ENCODE measurements at regions of chr7 and their contacts with region 1.

Region 1: GRCh38 chr7:113033959-113034358 is 52.7 kb downstream of the GPR85 start:
- DNase-seq: no peak
- ATAC-seq: no peak
- H3K4me3 ChIP-seq: no peak overlapping the region
- H3K27ac ChIP-seq: no peak overlapping the region
- H3K4me1 ChIP-seq: no peaks in the 10 kb centered on the region
- H3K27me3 ChIP-seq: no peaks in the 10 kb centered on the region; the same call in 1 of the 2 replicates
- CTCF ChIP-seq: no peak

Region 2: DNA sequence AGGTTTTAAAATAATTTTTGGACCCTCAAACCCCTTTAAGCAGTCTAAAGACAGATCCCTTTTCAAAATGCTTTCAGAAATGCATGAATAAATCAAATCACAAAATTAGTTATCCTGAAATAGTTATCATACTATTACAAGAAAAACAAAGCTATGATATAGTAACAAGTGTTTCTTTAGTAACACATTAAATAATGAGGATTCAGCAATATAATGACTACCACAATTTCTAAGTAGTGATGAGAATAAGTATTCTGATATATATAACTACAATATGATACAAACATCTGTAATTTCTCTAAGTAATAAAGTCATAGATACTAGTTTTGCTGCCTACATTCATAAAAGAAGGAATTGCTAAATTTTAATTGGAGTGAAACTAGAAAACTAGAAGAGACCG is 190.8 kb before region 1 on chr7:
- CTCF ChIA-PET with region 1: no interaction called
- POLR2A ChIA-PET with region 1: no interaction called
- in situ Hi-C with region 1: no loop called
- intact Hi-C with region 1: no loop called
- DNase-seq: no peak
- ATAC-seq: no peak
- H3K4me3 ChIP-seq: no peak overlapping the region
- H3K27ac ChIP-seq: no peak overlapping the region
- H3K4me1 ChIP-seq: no peaks in the 10 kb centered on the region
- H3K27me3 ChIP-seq: no peaks in the 10 kb centered on the region
- CTCF ChIP-seq: no peak

Region 3: GRCh38 chr7:113100121-113100603 is 66.2 kb after region 1 on chr7:
- CTCF ChIA-PET with region 1: no interaction called
- POLR2A ChIA-PET with region 1: no interaction called
- in situ Hi-C with region 1: no loop called
- intact Hi-C with region 1: no loop called
- DNase-seq: no peak
- ATAC-seq: no peak
- H3K4me3 ChIP-seq: no peak overlapping the region
- H3K27ac ChIP-seq: no peak overlapping the region
- H3K4me1 ChIP-seq: no peaks in the 10 kb centered on the region
- H3K27me3 ChIP-seq: no peaks in the 10 kb centered on the region
- CTCF ChIP-seq: no peak

Region 4: DNA sequence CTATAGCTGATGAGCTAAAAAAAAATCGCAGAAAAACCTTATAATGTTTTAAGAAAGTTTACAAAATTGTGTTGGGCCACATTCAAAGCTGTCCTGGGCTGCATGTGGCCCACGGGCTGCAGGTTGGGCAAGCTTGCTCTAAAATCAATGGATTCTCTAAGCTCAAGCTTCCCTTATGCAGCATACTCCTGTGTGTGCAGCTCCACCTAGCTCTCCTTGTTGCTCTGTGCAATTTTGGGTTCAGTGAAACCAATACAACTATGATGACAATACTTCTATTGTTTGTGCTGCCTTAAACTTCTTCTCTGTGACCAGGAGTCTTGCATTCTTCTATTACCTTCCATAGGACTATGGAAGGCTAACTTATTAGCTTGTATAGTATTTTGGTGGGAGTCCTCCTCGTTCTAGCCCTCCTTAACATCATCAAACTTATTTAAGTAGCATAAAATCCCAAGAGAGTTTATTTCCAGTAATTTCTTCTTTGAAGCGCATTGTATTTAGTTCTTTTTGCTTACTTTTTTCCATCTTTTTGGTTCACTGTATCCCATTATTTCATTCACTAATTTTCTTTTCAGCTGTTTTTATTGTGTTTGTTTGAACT is 255.3 kb after region 1 on chr7:
- CTCF ChIA-PET with region 1: no interaction called
- POLR2A ChIA-PET with region 1: no interaction called
- in situ Hi-C with region 1: no loop called
- intact Hi-C with region 1: loop called (anchors 10 kb)
- DNase-seq: peak; percentile 10
- ATAC-seq: no peak
- H3K4me3 ChIP-seq: no peak overlapping the region
- H3K27ac ChIP-seq: no peak overlapping the region
- H3K4me1 ChIP-seq: no peaks in the 10 kb centered on the region
- H3K27me3 ChIP-seq: no peaks in the 10 kb centered on the region
- CTCF ChIP-seq: peak; percentile 54